IMR-90 (cell line): ENCODE measurements at regions of chr1 and their contacts with region 1.

Region 1: DNA sequence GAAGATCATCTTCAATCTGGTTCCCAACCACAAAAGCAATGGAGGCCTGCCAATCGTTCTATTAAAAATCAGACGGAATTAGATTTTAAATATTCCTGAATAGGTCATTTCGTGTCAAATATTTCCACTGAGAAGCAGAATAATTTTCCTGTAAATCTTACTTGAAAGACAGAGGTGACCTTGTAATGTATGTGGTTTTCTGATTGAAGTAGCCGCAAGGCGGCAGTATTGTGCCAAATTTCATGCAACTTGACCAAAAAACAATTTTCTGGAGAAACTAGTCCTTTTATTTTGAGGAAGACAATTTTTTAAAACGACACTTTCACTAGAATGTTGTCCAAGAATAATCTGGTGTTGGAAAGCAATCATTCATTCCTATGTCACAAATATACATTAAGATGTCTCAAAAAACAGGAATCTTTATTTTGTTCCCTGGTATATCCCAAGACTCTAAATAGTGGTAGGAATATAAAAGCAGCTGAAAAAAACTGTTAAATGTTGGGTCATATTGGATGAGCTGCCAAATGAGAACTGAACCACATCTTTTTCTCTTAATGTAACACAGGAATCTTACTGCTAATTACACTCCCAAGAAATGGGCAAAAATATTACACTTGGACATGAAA is 33.6 kb downstream of the SPAG17 start:
- DNase-seq: peak; percentile 67
- ATAC-seq: no peak
- H3K4me3 ChIP-seq: no peak overlapping the region
- H3K27ac ChIP-seq: no peak overlapping the region
- H3K4me1 ChIP-seq: peaks cover 3% of the 10 kb centered on the region
- H3K27me3 ChIP-seq: no peaks in the 10 kb centered on the region
- CTCF ChIP-seq: peak; percentile 78
- POLR2A ChIP-seq: no peak
- RAD21 ChIP-seq: peak; percentile 72

Region 2: DNA sequence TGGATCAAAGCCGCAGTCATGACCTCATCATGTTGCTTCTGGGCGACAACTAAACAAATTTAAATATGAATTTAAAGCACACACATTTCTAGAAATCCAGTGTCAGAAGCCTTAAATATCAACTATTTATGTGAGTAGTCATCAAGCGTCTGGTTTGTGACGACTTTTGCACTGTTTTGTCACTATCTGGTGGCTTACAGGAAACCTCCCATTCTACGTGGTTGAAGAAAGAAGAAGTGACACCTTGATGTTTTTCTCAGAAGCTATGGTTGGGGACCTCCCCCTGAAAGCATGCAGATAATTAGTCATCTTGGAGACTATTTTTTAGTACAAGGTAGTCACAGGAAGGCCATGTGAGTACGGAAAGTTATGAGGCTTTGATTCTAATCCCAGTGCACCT is 487.1 kb before region 1 on chr1:
- CTCF ChIA-PET with region 1: no interaction called
- POLR2A ChIA-PET with region 1: no interaction called
- dilution Hi-C with region 1: no loop called
- in situ Hi-C with region 1: no loop called
- intact Hi-C with region 1: no loop called
- DNase-seq: no peak
- ATAC-seq: no peak
- H3K4me3 ChIP-seq: no peak overlapping the region
- H3K27ac ChIP-seq: no peak overlapping the region
- H3K4me1 ChIP-seq: peaks cover 2% of the 10 kb centered on the region; the same call in 1 of the 2 replicates
- H3K27me3 ChIP-seq: no peaks in the 10 kb centered on the region
- CTCF ChIP-seq: no peak
- POLR2A ChIP-seq: no peak
- RAD21 ChIP-seq: no peak

Region 3: DNA sequence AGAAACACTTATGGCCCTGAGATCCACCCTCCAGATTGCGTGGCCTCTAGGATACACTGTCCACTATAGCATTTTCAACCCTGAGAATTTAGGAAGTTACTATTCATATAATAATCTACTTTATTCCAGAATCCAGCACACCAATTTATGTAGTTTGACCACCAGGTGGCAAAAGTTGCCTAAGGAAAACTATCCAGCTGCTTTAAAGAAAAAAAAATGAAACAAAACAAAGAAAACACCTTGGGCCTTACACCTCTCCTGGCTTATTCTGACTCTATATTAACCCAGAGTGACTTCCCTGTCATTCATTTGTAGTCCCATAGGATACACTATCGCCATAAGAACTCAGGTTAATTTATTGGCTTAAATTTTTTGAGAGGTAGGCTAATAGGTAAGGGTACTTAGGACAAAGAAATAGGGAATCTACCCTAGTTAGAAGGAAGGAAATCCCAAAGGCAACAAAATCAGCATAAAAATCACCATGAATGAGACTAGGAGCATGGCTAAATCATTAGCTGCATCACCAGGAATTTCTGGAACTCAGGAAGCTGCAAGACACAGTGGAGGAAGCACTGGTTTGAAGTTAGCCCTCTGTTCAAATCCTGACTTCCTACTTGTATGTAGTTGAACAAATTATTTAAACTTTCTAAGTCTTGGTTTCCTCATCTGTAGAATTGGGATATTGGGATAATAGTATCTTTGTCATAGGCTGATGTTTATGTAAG is 73.9 kb before region 1 on chr1:
- CTCF ChIA-PET with region 1: no interaction called
- POLR2A ChIA-PET with region 1: no interaction called
- dilution Hi-C with region 1: no loop called
- in situ Hi-C with region 1: loop called (anchors 10 kb)
- intact Hi-C with region 1: loop called (anchors 1 kb)
- DNase-seq: peak; percentile 44
- ATAC-seq: peak; percentile 72
- H3K4me3 ChIP-seq: no peak overlapping the region
- H3K27ac ChIP-seq: no peak overlapping the region
- H3K4me1 ChIP-seq: no peaks in the 10 kb centered on the region
- H3K27me3 ChIP-seq: no peaks in the 10 kb centered on the region; the same call in 1 of the 2 replicates
- CTCF ChIP-seq: peak; percentile 67
- POLR2A ChIP-seq: no peak
- RAD21 ChIP-seq: peak; percentile 66

Region 4: GRCh38 chr1:118201524-118201923 is 50.1 kb after region 1 on chr1:
- CTCF ChIA-PET with region 1: no interaction called
- POLR2A ChIA-PET with region 1: no interaction called
- dilution Hi-C with region 1: no loop called
- in situ Hi-C with region 1: no loop called
- intact Hi-C with region 1: no loop called
- DNase-seq: no peak
- ATAC-seq: no peak
- H3K4me3 ChIP-seq: no peak overlapping the region
- H3K27ac ChIP-seq: no peak overlapping the region
- H3K4me1 ChIP-seq: no peaks in the 10 kb centered on the region
- H3K27me3 ChIP-seq: no peaks in the 10 kb centered on the region
- CTCF ChIP-seq: no peak
- POLR2A ChIP-seq: no peak
- RAD21 ChIP-seq: no peak

Region 5: DNA sequence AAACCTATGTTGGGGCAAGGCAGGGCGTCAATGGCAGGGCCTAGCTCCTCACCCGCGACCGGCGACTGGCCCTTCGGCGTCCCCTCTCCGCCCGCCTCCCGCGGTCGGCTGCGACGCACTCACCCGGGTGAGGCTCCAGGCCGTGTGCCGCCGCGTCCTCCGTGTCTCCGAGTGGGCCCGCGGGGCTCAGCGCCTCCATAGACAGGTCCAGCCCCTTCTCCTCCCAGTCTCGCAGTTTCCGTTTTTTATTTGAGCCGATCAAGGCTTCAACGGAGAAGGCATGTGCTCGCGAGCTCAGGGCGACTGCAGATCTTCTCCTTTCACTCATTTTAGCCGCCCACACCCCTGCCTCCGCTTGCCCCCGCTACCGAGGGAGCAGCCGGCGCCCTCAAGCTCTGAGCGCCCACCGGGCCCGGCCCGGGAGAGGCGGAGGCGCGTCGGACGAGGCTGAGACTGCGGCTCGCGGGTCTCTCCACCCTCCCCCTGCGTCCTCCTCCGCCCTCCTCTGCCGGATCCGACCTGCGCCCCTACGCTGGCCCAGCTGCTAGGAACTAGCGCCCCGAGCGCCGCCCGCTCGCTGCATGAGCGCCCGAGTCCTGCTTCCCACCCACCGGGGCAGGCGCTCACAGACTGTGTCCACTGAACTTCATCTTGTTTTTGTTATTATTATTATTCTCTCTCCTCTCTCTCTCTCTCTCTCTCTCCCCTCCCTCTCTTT is 836.2 kb after region 1 on chr1:
- CTCF ChIA-PET with region 1: no interaction called
- POLR2A ChIA-PET with region 1: no interaction called
- dilution Hi-C with region 1: no loop called
- in situ Hi-C with region 1: loop called (anchors 10 kb)
- intact Hi-C with region 1: no loop called
- DNase-seq: no peak
- ATAC-seq: peak; percentile 54
- H3K4me3 ChIP-seq: peak overlapping the region; percentile 18; the same call in 1 of the 2 replicates
- H3K27ac ChIP-seq: no peak overlapping the region
- H3K4me1 ChIP-seq: no peaks in the 10 kb centered on the region
- H3K27me3 ChIP-seq: peaks cover 100% of the 10 kb centered on the region
- CTCF ChIP-seq: no peak
- POLR2A ChIP-seq: no peak
- RAD21 ChIP-seq: no peak

Region 6: DNA sequence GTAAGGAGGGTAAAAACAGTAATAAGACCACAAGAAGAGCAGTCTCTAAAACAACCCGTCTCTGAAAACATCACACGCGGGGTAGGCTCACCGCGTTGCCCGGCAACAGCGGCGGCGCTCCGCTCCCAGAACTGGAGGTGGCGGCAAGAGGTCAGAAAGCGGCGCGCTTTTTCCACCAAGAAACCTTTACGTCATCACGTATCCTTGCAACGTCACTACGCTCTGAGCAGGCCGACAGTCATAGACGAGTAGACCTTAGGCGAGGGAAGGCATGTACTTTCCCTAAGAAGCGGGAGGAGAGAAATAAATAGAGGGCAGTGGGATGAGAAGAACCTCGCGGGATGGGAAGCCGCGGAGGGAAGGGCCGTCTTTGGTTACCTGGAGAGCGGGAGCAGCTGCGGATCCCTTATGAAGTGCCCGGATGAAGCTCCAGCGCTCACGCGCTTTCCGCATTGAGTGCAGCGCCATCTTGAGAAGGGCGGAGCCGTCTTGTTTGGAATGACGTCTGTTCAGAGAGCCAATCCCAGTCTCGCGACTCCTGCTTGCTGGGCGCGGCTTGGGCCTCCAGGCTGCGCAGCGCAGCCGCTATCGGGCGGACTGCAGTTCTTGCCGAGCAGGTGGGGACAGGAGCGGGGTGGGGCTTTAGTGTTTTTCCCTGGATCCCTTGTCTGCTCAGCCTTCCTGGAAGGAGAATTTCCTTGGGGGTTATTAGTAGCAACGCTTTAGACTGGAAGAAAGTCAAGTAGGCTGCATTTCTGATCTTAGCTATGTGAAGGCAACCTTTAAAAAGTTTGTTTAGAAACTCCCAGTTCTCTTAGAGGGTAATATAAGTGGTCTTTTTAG is 989.0 kb after region 1 on chr1 and contains the start of gene WARS2:
- CTCF ChIA-PET with region 1: no interaction called
- POLR2A ChIA-PET with region 1: no interaction called
- dilution Hi-C with region 1: no loop called
- in situ Hi-C with region 1: no loop called
- intact Hi-C with region 1: loop called (anchors 5 kb)
- DNase-seq: peak; percentile 98
- ATAC-seq: peak; percentile 99
- H3K4me3 ChIP-seq: peak within 1 kb of the TSS; percentile 52
- H3K27ac ChIP-seq: peak within 1 kb of the TSS; percentile 79
- H3K4me1 ChIP-seq: peaks cover 3% of the 10 kb centered on the region
- H3K27me3 ChIP-seq: no peaks in the 10 kb centered on the region
- CTCF ChIP-seq: 0 out of 2 replicates have a peak, but pooled peaks have one; percentile 4
- POLR2A ChIP-seq: peak; percentile 97
- RAD21 ChIP-seq: no peak
- total RNA-seq, gene WARS2: 18.3 and 20.3 TPM in 2 replicates

Region 7: DNA sequence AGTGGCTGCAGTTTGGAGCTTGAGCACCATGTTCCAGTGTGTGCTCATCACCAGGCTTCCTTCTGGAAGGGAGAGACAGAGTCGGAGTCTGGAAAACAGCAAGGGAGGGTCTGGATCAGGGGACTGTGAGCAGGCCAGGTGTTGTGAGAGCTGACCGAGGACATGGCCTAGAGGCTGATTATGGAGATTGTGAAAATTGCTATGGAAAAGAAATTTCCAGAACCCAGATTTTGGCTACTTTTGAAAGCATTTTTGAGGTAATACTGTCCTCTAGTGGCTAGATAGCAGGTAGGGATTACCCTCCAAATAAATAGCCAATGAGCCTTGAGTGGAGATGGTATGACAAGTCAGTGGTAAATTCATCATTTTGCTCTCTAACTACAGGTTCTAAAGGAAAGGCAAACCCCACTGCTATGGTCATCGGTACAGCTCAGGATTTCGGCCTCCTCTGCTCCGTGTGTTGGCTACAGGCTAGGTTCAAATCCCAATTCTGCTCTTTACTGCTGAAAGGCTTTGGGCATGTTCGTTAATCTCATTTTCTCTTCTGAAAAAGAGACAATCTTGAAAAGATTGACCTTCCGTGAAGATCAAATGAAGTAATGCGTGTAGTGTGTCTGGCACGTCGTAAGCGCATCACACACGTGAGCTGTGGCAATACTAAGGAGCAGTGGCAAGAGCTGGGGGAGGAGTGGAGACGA is 1216.2 kb after region 1 on chr1:
- CTCF ChIA-PET with region 1: no interaction called
- POLR2A ChIA-PET with region 1: no interaction called
- dilution Hi-C with region 1: no loop called
- in situ Hi-C with region 1: loop called (anchors 25 kb)
- intact Hi-C with region 1: loop called (anchors 1 kb)
- DNase-seq: peak; percentile 45
- ATAC-seq: peak; percentile 77
- H3K4me3 ChIP-seq: no peak overlapping the region
- H3K27ac ChIP-seq: no peak overlapping the region
- H3K4me1 ChIP-seq: no peaks in the 10 kb centered on the region
- H3K27me3 ChIP-seq: peaks cover 8% of the 10 kb centered on the region
- CTCF ChIP-seq: peak; percentile 97
- POLR2A ChIP-seq: 0 out of 2 replicates have a peak, but pooled peaks have one; percentile 31
- RAD21 ChIP-seq: peak; percentile 96